ENCODE measurements at regions of chr21 and their contacts with region 1.

Region 1: GRCh38 chr21:45478115-45478801 is 64.0 kb downstream of the SLC19A1 start:
- DNase-seq: peak; percentile 66 to 88 (median 84)
- ATAC-seq: peak; percentile 88
- H3K4me3 ChIP-seq: peak overlapping the region; percentile 78
- H3K4me3 Mint-ChIP-seq: peak overlapping the region; percentile 78 to 91 (median 84)
- H3K27ac ChIP-seq: peak overlapping the region; percentile 93
- H3K27ac Mint-ChIP-seq: peak overlapping the region; percentile 93 to 100 (median 99)
- H3K4me1 ChIP-seq: peaks cover 14 to 53% of the 10 kb centered on the region in 2 donors
- H3K4me1 Mint-ChIP-seq: peaks cover 27 to 65% (median 43%) of the 10 kb centered on the region in 7 donors
- H3K27me3 ChIP-seq: no peaks in the 10 kb centered on the region
- H3K27me3 Mint-ChIP-seq: no peaks in the 10 kb centered on the region

Region 2: GRCh38 chr21:45167796-45168222 is 310.4 kb before region 1 on chr21:
- CTCF ChIA-PET with region 1: no interaction called
- POLR2A ChIA-PET with region 1: no interaction called
- intact Hi-C with region 1: no loop called
- DNase-seq: no peak
- ATAC-seq: no peak
- H3K4me3 ChIP-seq: no peak overlapping the region
- H3K4me3 Mint-ChIP-seq: no peak overlapping the region
- H3K27ac ChIP-seq: no peak overlapping the region
- H3K27ac Mint-ChIP-seq: no peak overlapping the region
- H3K4me1 ChIP-seq: peaks cover 3 to 8% of the 10 kb centered on the region in 2 donors
- H3K4me1 Mint-ChIP-seq: peaks cover 19 to 50% (median 34%) of the 10 kb centered on the region in 7 donors
- H3K27me3 ChIP-seq: no peaks in the 10 kb centered on the region
- H3K27me3 Mint-ChIP-seq: no peaks in the 10 kb centered on the region

Region 3: GRCh38 chr21:45554477-45555175 is 76.4 kb after region 1 on chr21:
- CTCF ChIA-PET with region 1: no interaction called
- POLR2A ChIA-PET with region 1: interaction called, 4 read pairs
- intact Hi-C with region 1: loop called in 1 of 2 experiments (anchors 1 kb)
- DNase-seq: peak; percentile 74 to 99 (median 91)
- ATAC-seq: peak; percentile 93
- H3K4me3 ChIP-seq: peak overlapping the region; percentile 89
- H3K4me3 Mint-ChIP-seq: peak overlapping the region; percentile 92 to 99 (median 96)
- H3K27ac ChIP-seq: peak overlapping the region; percentile 67
- H3K27ac Mint-ChIP-seq: peak overlapping the region; percentile 87 to 99 (median 96)
- H3K4me1 ChIP-seq: peaks cover 24 to 26% of the 10 kb centered on the region in 2 donors
- H3K4me1 Mint-ChIP-seq: peaks cover 22 to 39% (median 28%) of the 10 kb centered on the region in 7 donors
- H3K27me3 ChIP-seq: no peaks in the 10 kb centered on the region
- H3K27me3 Mint-ChIP-seq: no peaks in the 10 kb centered on the region

Measured in naive thymus-derived CD4-positive, alpha-beta T cell (primary cell).